Activated CD8-positive, alpha-beta memory T cell treated with anti-CD3 and anti-CD28 coated beads, Interleukin-2, amount 10 ng/mL, durations not matched to agents 7 days and 5 days (primary cell): ENCODE measurements at regions of chr6 and their contacts with region 1.

Region 1: GRCh38 chr6:139375232-139376016 is 976 bp upstream of the CITED2 start:
- DNase-seq: peak; percentile 91
- ATAC-seq: peak; percentile 59
- H3K4me3 Mint-ChIP-seq: peak overlapping the region; percentile 96
- H3K27ac Mint-ChIP-seq: peak overlapping the region; percentile 97
- H3K4me1 Mint-ChIP-seq: peaks cover 46% of the 10 kb centered on the region
- H3K27me3 Mint-ChIP-seq: no peaks in the 10 kb centered on the region

Region 2: DNA sequence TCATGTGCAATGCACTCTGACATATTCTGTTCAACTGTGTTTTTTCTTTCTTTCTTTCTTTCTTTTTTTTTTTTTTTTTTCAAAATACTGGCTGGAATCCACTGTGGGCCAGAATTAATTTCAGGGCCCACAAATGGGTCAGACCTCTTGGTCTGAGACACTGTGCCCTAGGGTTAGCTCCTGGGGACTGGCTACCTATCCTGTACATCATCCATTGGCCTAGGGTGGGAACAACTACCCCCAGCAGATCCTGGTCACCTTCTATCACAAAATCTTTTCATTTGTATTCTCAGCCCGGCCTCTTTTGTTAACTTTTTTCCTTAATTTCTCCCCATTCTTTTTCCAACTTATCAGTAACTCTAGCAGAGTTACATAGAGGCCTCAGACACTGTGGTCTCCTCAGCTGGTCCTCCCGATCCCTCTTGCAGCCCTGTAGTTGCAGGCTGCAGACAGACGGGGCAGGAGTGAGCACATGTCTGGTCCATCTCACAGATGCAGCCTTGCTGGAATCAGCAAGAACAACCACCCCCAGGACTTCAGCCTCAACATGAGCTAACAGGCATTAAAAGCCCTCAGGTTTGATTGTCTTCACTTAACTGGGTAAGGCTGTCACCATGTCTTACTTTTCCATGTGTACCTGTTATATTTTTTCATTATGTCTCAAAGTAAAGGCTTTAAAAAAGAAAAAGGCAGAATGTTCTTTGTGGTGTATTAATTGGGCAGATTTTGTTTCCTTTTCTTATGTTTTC is 125.0 kb before region 1 on chr6:
- CTCF ChIA-PET with region 1: no interaction called
- DNase-seq: peak; percentile 84
- ATAC-seq: peak; percentile 95
- H3K4me3 Mint-ChIP-seq: peak overlapping the region; percentile 44
- H3K27ac Mint-ChIP-seq: peak overlapping the region; percentile 86
- H3K4me1 Mint-ChIP-seq: peaks cover 40% of the 10 kb centered on the region
- H3K27me3 Mint-ChIP-seq: no peaks in the 10 kb centered on the region

Region 3: GRCh38 chr6:139443231-139444130 is 68.1 kb after region 1 on chr6:
- CTCF ChIA-PET with region 1: interaction called, 11 read pairs
- DNase-seq: no peak
- ATAC-seq: no peak
- H3K4me3 Mint-ChIP-seq: peak overlapping the region; percentile 40
- H3K27ac Mint-ChIP-seq: no peak overlapping the region
- H3K4me1 Mint-ChIP-seq: peaks cover 56% of the 10 kb centered on the region
- H3K27me3 Mint-ChIP-seq: no peaks in the 10 kb centered on the region

Region 4: GRCh38 chr6:139533573-139534471 is 158.4 kb after region 1 on chr6:
- CTCF ChIA-PET with region 1: interaction called, 28 read pairs
- DNase-seq: peak; percentile 45
- ATAC-seq: peak; percentile 13
- H3K4me3 Mint-ChIP-seq: peak overlapping the region; percentile 65
- H3K27ac Mint-ChIP-seq: peak overlapping the region; percentile 100
- H3K4me1 Mint-ChIP-seq: peaks cover 81% of the 10 kb centered on the region
- H3K27me3 Mint-ChIP-seq: no peaks in the 10 kb centered on the region